PC-9 (cell line): ENCODE measurements at regions of chr3 and their contacts with region 1.

Region 1: DNA sequence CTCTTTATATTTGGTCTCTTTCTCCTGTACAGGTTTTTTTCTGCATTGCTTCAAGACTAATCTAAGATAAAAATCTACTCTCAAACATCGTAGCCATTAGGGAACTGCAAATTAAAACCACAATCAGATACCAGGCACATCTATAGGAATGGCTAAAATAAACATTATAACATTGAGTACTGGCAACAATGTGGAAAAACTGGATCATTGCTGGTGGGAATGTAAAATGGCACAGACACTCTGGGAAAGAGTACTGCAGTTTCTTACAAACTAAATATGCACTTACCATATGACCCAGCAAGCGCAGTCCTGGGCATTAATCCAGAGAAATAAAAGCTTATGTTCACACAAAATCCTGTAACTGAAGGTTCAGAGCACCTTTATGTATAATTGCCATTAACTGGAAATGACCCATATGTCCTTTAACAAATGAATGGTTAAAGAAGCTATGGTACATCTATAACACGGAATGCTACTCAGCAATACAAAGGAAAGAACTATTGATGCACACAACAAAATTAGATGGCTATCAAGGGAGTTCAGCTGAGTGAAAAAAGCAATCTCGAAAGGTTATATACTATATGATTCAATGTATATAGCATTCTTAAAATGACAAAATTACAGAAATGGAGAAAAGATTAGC is 6.3 kb downstream of the ABCC5 start:
- DNase-seq: peak; percentile 47 to 98
- H3K4me3 ChIP-seq: no peak overlapping the region
- H3K27ac ChIP-seq: peak overlapping the region; percentile 97
- H3K4me1 ChIP-seq: peaks cover 93% of the 10 kb centered on the region
- H3K27me3 ChIP-seq: no peaks in the 10 kb centered on the region
- CTCF ChIP-seq: no peak

Region 2: GRCh38 chr3:183914856-183915255 is 96.5 kb before region 1 on chr3:
- CTCF ChIA-PET with region 1: interaction called, 7 read pairs
- POLR2A ChIA-PET with region 1: no interaction called
- intact Hi-C with region 1: loop called (anchors 1 kb)
- DNase-seq: no peak
- H3K4me3 ChIP-seq: no peak overlapping the region
- H3K27ac ChIP-seq: peak overlapping the region; percentile 63
- H3K4me1 ChIP-seq: peaks cover 48% of the 10 kb centered on the region
- H3K27me3 ChIP-seq: no peaks in the 10 kb centered on the region
- CTCF ChIP-seq: no peak

Region 3: DNA sequence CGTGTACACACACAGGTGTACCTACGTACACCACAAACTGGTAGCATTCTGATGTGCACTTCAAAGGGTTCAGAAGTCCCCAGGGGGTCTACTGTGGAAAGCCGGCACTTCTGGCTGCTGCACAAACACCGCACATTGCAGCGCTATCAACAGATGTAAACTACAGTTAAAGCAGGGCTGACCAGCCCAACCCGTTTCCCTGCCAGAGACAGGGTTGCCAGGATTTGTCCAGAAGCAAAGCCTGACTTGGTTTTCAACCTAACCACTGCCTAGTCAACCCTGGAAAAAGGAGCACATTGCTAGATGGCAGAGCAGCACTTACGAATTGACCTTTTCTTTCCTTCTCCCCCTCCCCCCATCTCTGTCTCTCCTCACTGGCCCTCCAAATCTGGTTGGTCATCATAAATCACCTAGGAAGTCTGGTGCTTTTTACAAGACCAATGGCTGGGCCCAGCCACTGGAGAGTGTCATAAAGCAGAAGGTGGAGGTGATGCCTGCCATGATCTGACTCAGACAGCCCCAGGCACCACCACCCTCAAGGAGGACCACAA is 45.0 kb before region 1 on chr3:
- CTCF ChIA-PET with region 1: no interaction called
- POLR2A ChIA-PET with region 1: interaction called, 5 read pairs
- intact Hi-C with region 1: loop called (anchors 1 kb)
- DNase-seq: peak; percentile 83 to 98
- H3K4me3 ChIP-seq: peak overlapping the region; percentile 27
- H3K27ac ChIP-seq: peak overlapping the region; percentile 99
- H3K4me1 ChIP-seq: peaks cover 72% of the 10 kb centered on the region
- H3K27me3 ChIP-seq: no peaks in the 10 kb centered on the region
- CTCF ChIP-seq: no peak

Region 4: GRCh38 chr3:184050217-184050847 is 39.0 kb after region 1 on chr3:
- CTCF ChIA-PET with region 1: no interaction called
- POLR2A ChIA-PET with region 1: no interaction called
- intact Hi-C with region 1: no loop called
- DNase-seq: no peak
- H3K4me3 ChIP-seq: no peak overlapping the region
- H3K27ac ChIP-seq: no peak overlapping the region
- H3K4me1 ChIP-seq: no peaks in the 10 kb centered on the region
- H3K27me3 ChIP-seq: no peaks in the 10 kb centered on the region; the same call in 1 of the 2 replicates
- CTCF ChIP-seq: no peak